Heart left ventricle (tissue), 16 donors: ENCODE measurements at regions of chr3 and their contacts with region 1.

Region 1: DNA sequence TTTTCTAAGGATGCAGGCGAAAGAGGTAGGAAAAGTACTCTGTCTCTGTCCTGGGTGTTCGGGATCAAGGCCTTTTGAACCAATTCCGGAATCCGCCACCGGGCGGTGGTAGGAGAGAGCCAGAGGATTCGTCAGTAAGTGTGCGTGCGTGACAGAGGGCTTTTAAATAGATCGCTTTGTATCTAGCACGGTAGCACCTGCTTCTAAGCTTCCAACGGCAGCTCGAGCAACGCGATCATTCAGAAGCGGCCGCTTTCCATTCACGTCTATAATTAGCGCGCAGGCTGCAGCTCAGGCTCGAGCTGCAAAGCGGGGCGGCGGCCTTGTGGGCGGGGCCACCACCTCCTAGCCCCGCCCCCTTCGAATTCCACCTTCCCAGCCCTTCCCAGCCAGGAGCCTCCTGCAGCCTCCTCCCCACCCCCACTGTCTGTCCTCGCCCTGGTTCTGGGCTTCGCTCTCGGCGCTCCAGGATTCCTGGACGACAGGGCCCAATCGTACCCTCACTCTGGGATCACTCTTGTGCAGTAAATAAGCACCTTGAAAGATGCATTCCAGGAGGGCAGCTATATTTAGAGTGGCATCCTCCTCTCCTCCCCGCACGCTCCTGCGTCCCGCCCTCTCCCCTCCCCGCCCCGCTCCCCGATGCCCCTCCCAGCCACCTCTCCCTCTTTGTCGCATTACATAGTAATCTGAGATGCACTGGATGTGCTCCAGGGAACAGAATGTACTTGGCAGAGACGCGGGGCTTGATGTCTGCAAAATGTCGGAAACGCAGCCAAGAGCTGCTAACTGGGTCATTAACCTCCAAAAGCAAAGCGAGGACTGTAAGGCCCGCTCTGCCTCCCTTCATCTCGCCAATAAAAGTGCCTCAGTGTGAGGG is 224.1 kb upstream of the TPRG1 start:
- DNase-seq: peak; percentile 91 to 97 (median 95)
- ATAC-seq: peak; percentile 90 to 93 (median 91)
- H3K4me3 ChIP-seq: peak overlapping the region in 11 of 12 donors; percentile 14 to 58 (median 51)
- H3K27ac ChIP-seq: peak overlapping the region; percentile 90 to 99 (median 96)
- H3K4me1 ChIP-seq: peaks cover 0 to 95% (median 38%) of the 10 kb centered on the region in 12 donors
- H3K27me3 ChIP-seq: no peaks in the 10 kb centered on the region
- CTCF ChIP-seq: peak in 9 of 12 donors; percentile 14 to 50 (median 35)
- POLR2A ChIP-seq: peak in 1 of 2 donors; percentile 73

Region 2: GRCh38 chr3:188052169-188053030 is 895.2 kb before region 1 on chr3:
- intact Hi-C with region 1: loop called in 8 of 10 experiments (anchors 5 to 10 kb)
- DNase-seq: peak; percentile 84 to 92 (median 89)
- ATAC-seq: peak; percentile 97 to 98 (median 98)
- H3K4me3 ChIP-seq: peak overlapping the region in 6 of 12 donors; percentile 12 to 37 (median 24)
- H3K27ac ChIP-seq: peak overlapping the region; percentile 49 to 92 (median 79)
- H3K4me1 ChIP-seq: peaks cover 0 to 29% (median 15%) of the 10 kb centered on the region in 12 donors
- H3K27me3 ChIP-seq: peaks cover 0 to 3% (median 0%) of the 10 kb centered on the region in 9 donors
- CTCF ChIP-seq: peak in 11 of 12 donors; percentile 19 to 82 (median 59)
- POLR2A ChIP-seq: peak in 1 of 2 donors; percentile 24

Region 3: DNA sequence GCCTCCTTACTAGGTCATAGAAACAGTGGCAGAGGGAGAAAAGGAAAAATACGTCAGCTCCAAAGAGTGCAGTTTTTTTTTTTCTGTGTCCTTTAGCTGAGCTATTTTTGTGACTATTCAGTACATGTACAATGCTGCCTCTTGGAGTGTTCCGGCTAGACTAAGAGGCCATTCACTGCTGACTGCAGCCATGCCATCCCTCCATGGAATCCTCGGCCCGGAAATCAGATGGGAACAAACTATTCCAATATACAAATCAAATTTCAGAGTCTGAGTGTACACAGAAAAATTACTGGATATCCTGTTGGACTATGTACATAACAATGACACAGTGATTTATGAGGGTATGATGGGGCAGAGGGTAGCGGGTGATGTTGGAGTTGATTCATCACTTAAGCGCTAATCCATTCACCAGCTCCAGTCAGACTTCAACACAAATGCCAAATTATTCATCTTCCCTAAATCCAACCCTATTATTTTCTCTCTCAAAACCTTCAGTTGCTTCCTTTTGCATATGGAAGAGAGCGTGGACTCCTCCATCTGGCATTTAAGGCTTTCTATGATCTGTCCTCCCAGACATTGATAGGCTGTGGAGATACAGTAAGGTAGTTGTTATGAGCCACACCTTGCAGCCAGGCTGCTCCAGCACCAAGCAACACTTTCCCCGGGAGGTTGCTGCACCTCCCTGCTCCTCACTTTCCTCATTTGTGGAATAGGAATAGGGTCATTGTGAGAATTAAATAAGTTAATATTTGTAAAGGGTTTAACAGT is 684.5 kb before region 1 on chr3:
- intact Hi-C with region 1: loop called in 5 of 10 experiments (anchors 5 to 10 kb)
- DNase-seq: peak in 4 of 5 donors; percentile 47 to 60 (median 50)
- ATAC-seq: peak; percentile 79 to 88 (median 86)
- H3K4me3 ChIP-seq: no peak overlapping the region
- H3K27ac ChIP-seq: peak overlapping the region; percentile 74 to 96 (median 89)
- H3K4me1 ChIP-seq: peaks cover 2 to 94% (median 64%) of the 10 kb centered on the region in 12 donors
- H3K27me3 ChIP-seq: no peaks in the 10 kb centered on the region
- CTCF ChIP-seq: peak in 1 of 12 donors; percentile 7
- POLR2A ChIP-seq: no peak

Region 4: DNA sequence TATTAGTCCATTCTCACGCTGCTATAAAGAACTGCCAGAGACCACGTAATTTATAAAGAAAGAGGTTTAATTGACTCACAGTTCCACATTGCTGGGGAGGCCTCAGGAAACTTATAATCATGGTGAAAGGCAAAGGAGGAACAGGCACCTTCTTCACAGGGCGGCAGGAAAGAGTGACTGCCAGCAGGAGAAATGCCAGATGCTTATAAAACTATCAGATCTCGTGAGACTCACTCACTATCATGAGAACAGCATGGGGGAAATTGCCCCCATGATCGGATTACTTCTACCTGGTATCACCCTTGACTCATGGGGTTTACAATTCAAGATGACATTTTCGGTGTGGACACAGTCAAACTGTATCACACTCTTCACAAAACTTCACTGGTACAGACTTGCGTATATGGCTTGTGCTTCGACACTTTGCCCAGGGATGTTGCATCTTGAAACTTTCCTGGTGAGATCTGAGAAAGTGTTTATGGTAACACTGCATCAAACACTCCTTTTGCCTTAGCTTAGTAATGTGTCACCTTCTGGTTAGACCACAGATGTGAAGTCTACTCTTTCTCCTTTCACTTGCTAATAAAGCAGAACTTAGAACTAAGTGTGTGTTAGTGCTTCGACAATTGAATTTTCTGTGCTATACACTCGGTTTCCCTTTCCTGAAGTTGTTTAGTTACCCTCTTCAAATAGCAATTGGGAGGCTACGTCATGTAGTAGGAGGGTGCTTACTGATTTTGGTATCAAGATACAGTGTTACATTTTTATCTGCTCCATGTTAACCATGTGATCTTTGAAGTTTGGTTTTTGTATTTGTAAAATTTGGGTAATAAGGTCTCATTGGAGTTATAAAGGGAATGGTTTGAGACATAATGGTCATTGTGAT is 608.0 kb before region 1 on chr3:
- intact Hi-C with region 1: loop called in 2 of 10 experiments (anchors 5 to 10 kb)
- DNase-seq: no peak
- ATAC-seq: no peak
- H3K4me3 ChIP-seq: no peak overlapping the region
- H3K27ac ChIP-seq: peak overlapping the region in 9 of 12 donors; percentile 2 to 55 (median 18)
- H3K4me1 ChIP-seq: peaks cover 0 to 45% (median 20%) of the 10 kb centered on the region in 12 donors
- H3K27me3 ChIP-seq: no peaks in the 10 kb centered on the region
- CTCF ChIP-seq: no peak
- POLR2A ChIP-seq: no peak

Region 5: DNA sequence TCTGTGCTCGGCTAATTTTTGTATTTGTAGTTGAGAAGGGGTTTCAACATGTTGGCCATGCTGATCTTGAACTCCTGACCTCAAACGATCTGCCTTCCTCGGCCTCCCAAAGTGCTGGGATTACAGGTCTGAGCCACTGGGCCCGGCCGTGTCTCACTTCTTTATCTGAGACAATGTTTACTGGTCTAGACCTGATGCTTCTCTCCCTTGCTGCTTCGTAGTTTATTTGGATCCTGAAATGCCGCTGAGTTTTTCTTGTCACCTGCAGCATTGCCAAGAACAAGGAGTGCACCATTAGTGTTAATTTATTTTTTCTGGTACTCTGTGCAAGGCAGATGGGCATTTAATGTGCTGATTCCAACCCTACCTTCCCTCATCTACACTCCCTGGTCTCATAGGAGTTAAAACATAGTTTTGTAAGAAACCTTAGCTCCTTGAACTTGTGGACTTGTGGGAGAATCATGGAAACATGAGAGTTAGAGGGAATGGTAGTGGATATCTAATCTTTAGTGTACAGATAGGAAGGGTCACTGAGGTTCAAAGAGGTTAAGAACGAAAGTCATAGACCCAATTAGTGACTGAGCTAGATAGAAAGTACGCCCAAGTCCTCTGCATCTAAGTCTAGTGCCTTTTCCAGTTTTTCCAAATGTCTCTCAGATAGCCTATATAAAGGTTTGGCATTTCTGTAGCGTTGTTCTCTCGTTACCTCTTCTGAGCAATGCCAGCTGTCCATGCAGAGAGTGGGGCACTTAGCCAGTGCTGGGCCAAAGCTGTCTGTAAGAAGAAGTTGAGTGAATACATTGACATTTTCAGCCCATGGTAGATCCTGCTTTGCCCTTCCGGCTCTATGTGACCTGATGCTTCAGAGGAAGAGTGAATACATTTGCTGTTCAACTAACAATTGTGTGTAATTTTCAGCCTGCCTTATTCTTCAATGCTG is 549.6 kb before region 1 on chr3:
- intact Hi-C with region 1: loop called in 2 of 10 experiments (anchors 5 kb)
- DNase-seq: peak in 4 of 5 donors; percentile 16 to 60 (median 57)
- ATAC-seq: peak; percentile 40 to 83 (median 62)
- H3K4me3 ChIP-seq: peak overlapping the region in 9 of 12 donors; percentile 2 to 33 (median 23)
- H3K27ac ChIP-seq: peak overlapping the region; percentile 43 to 81 (median 72)
- H3K4me1 ChIP-seq: peaks cover 0 to 56% (median 29%) of the 10 kb centered on the region in 12 donors
- H3K27me3 ChIP-seq: no peaks in the 10 kb centered on the region
- CTCF ChIP-seq: no peak
- POLR2A ChIP-seq: no peak

Region 6: DNA sequence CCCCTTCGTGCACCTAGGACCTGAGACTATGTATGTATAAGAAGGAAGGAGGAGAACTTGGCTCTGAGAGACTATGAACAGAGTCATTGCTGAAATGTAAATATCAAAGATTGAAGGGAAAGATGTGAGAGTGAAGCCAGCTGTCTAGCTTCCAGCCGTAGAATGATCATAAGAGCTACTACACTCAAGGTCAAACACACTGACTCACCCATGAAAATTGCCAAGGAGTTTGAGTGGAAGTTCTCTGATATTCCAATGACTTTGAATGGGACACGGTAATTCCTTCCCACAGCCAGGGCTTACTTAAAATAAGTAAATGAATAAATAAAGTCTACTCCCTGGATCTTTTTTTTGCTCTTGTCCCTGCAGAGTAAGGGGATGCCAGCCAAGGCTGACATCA is 174.8 kb before region 1 on chr3:
- intact Hi-C with region 1: loop called in 1 of 10 experiments (anchors 10 kb)
- DNase-seq: no peak
- ATAC-seq: peak in 3 of 4 donors; percentile 74 to 83 (median 81)
- H3K4me3 ChIP-seq: no peak overlapping the region
- H3K27ac ChIP-seq: peak overlapping the region in 7 of 12 donors; percentile 9 to 34 (median 20)
- H3K4me1 ChIP-seq: peaks cover 0 to 51% (median 17%) of the 10 kb centered on the region in 12 donors
- H3K27me3 ChIP-seq: no peaks in the 10 kb centered on the region
- CTCF ChIP-seq: no peak
- POLR2A ChIP-seq: no peak

Region 7: DNA sequence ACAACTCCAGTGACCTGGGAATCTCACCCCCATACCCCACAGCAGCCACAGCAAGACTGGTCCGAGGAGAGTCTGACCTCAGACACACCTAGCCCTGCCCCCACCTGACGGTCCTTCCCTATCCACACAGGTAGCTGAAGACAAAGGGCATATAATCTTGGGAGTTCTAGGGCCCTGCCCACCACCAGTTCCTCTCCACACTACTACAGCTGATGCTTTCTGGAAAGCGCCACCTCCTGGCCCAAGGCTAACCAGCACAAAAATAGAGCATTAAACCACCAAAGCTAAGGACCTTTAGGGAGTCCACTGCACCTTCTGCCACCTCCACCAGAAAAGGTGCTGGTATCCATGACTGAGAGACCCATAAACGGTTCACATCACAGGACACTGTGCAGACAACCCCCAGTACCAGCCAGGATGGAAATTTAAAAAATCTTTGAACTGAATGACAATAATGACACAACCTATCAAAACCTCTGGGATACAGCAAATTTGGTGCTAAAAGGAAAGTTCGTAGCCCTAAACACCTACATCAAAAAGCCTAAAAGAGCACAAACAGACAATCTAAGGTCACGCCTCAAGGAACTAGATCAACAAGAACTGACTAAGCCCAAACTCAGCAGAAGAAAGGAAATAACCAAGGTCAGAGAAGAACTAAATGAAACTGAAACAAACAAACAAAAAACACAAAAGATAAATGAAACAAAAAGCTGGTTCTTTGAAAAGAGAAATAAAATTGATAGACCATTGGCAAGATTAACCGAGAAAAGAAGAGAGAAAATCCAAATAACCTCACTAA is 102.0 kb after region 1 on chr3:
- intact Hi-C with region 1: no loop called
- DNase-seq: peak in 1 of 5 donors; percentile 20
- ATAC-seq: no peak
- H3K4me3 ChIP-seq: no peak overlapping the region
- H3K27ac ChIP-seq: peak overlapping the region in 1 of 12 donors; percentile 50
- H3K4me1 ChIP-seq: no peaks in the 10 kb centered on the region
- H3K27me3 ChIP-seq: no peaks in the 10 kb centered on the region
- CTCF ChIP-seq: no peak
- POLR2A ChIP-seq: no peak